ENCODE measurements at regions of chr19 and their contacts with region 1.

Region 1: DNA sequence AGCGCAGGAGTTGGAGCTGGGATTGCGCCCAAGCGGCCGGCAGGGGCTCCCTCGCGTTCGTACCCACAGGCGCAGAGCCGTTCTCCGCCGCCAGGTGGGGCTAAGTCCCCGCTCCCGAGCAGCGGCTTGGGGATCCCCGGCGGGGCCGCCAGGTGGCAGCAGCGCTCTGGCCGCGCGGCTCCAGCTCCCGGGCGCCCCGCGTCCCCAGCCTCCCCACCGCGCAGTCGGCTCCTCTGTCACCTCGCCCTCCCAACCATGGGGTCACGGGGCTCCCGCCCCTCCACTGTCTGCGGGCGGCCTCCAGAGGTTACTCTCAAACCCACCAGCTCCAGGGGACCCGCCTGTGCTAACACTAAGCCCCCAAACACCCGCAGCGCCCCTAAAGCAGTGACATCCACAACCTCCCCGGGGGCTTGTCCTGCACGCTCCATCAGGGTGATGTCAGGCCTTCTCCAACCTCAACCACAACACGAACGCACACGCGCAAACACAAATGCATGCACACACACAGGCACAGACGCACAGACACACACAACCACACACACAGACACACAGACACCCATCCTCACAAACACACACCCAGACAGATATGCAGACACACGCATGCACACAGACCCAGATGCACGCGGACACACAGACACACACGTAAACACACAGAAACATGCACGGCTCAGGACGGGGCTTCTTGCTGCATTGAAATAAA is 18.4 kb upstream of the KCTD15 start:
- DNase-seq: peak; percentile 70 to 82 (median 77)
- H3K4me3 ChIP-seq: no peak overlapping the region
- H3K4me3 Mint-ChIP-seq: peak overlapping the region in 4 of 7 donors; percentile 11 to 66 (median 56)
- H3K27ac ChIP-seq: no peak overlapping the region
- H3K27ac Mint-ChIP-seq: peak overlapping the region in 1 of 8 donors; percentile 1
- H3K4me1 ChIP-seq: peaks cover 5% of the 10 kb centered on the region
- H3K4me1 Mint-ChIP-seq: peaks cover 5 to 12% (median 11%) of the 10 kb centered on the region in 3 donors
- H3K27me3 ChIP-seq: peaks cover 5% of the 10 kb centered on the region
- H3K27me3 Mint-ChIP-seq: peaks cover 21 to 39% of the 10 kb centered on the region in 2 donors

Region 2: DNA sequence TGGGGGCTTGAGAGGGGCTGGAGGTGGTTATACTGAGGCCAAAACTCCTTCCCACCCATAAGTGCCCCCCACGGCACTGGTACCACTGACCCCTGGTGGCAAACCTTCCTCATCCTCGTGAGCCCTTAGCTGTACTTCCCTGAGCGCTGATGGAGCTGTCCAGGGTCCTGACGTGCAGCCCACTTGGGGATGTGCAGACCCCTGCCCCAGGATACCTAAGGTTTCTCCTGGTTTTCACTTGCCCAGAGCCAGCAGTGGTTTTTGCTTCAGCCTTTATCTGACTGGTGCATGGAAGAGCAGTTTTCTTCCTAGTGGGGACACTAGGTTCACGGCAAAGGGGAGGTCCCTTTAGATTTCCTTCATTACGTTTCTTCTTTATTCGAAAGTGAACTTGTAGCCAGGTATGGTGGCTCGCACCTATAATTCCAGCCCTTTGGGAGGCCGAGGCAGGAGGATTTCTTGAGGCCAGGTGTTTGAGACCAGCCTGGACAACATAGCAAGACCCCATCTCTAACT is 10.3 kb before region 1 on chr19:
- CTCF ChIA-PET with region 1: interaction called, 12 read pairs
- POLR2A ChIA-PET with region 1: no interaction called
- DNase-seq: no peak
- H3K4me3 ChIP-seq: no peak overlapping the region
- H3K4me3 Mint-ChIP-seq: no peak overlapping the region
- H3K27ac ChIP-seq: no peak overlapping the region
- H3K27ac Mint-ChIP-seq: no peak overlapping the region
- H3K4me1 ChIP-seq: no peaks in the 10 kb centered on the region
- H3K4me1 Mint-ChIP-seq: no peaks in the 10 kb centered on the region
- H3K27me3 ChIP-seq: no peaks in the 10 kb centered on the region
- H3K27me3 Mint-ChIP-seq: peaks cover 14 to 27% of the 10 kb centered on the region in 2 donors

Region 3: DNA sequence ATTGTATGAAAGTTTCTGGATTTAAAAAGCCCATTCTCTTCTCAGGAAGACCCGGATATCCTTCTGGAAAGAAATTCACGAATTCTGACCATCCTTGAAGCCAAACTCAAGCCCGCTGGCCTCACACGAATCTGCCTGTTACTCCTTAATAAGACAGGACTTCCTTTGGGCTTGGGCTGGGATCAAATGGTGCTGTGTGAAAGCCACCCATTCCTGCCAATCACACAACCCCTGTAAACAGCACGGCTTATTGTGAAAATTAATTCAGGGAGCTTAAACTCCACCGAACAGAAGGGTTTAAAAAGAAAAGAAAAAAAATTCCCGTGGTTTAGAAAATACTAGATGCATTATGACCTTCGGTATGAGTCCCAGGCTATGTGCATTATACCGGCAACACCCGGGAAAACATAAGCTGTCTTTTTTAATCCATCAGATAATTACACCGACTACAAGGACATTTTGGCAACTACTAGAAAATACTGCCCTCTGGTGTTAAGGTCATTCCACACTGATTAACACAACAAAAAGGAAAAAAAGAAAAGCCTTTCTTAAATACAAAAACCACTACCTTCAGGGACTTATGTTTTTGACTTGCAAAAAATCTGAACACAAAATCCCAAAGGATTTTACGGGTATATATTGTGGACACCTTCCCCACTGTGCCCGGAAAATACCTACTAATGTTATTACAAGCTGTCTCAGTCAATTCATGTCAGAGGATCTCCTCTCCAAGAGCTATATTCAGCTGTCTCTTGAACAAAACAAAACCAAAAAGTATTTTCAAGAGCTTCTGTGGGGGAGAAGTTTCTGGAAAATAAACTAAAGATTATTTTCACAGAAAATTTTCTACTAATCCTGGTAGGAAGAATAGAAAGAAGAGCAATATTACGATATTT is 318.0 kb after region 1 on chr19:
- CTCF ChIA-PET with region 1: interaction called, 17 read pairs
- POLR2A ChIA-PET with region 1: interaction called, 9 read pairs
- DNase-seq: peak in 1 of 5 donors; percentile 16
- H3K4me3 ChIP-seq: no peak overlapping the region
- H3K4me3 Mint-ChIP-seq: no peak overlapping the region
- H3K27ac ChIP-seq: no peak overlapping the region
- H3K27ac Mint-ChIP-seq: no peak overlapping the region
- H3K4me1 ChIP-seq: no peaks in the 10 kb centered on the region
- H3K4me1 Mint-ChIP-seq: peaks cover 1 to 4% (median 3%) of the 10 kb centered on the region in 3 donors
- H3K27me3 ChIP-seq: peaks cover 11% of the 10 kb centered on the region
- H3K27me3 Mint-ChIP-seq: peaks cover 4 to 23% of the 10 kb centered on the region in 2 donors

Region 4: DNA sequence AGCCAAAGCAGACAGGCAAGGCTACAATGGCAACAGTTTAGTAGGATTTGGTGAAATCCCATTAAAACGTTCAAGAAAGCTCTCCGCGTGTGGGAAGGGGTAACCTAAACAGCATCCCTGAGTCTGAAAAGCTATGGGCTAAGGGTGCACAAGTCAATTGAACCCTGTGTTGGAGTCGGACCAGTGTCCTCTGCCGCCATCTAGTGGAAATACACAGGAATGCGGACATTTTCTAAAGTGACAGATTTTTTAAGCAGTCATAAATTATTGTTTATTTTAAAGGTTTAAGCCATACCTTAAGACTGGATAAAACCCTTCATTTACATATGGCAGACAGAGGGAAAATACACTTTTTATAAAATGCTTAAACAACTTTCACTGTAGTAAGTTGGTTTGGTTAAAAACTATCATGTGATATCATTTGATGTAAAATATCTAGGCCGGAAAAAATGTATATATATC is 367.5 kb after region 1 on chr19:
- CTCF ChIA-PET with region 1: interaction called, 13 read pairs
- POLR2A ChIA-PET with region 1: no interaction called
- DNase-seq: peak; percentile 23 to 67 (median 47)
- H3K4me3 ChIP-seq: no peak overlapping the region
- H3K4me3 Mint-ChIP-seq: no peak overlapping the region
- H3K27ac ChIP-seq: no peak overlapping the region
- H3K27ac Mint-ChIP-seq: no peak overlapping the region
- H3K4me1 ChIP-seq: no peaks in the 10 kb centered on the region
- H3K4me1 Mint-ChIP-seq: no peaks in the 10 kb centered on the region
- H3K27me3 ChIP-seq: no peaks in the 10 kb centered on the region
- H3K27me3 Mint-ChIP-seq: peaks cover 0 to 5% of the 10 kb centered on the region in 2 donors

Measured in CD8-positive, alpha-beta memory T cell (primary cell).